ENCODE measurements at regions of chr9 and their contacts with region 1.

Region 1: GRCh38 chr9:133485361-133486260 is 6.7 kb upstream of the SLC2A6 start:
- DNase-seq: peak; percentile 41
- ATAC-seq: peak; percentile 45
- H3K4me3 Mint-ChIP-seq: no peak overlapping the region
- H3K27ac Mint-ChIP-seq: no peak overlapping the region
- H3K4me1 Mint-ChIP-seq: peaks cover 7% of the 10 kb centered on the region
- H3K27me3 Mint-ChIP-seq: no peaks in the 10 kb centered on the region

Region 2: DNA sequence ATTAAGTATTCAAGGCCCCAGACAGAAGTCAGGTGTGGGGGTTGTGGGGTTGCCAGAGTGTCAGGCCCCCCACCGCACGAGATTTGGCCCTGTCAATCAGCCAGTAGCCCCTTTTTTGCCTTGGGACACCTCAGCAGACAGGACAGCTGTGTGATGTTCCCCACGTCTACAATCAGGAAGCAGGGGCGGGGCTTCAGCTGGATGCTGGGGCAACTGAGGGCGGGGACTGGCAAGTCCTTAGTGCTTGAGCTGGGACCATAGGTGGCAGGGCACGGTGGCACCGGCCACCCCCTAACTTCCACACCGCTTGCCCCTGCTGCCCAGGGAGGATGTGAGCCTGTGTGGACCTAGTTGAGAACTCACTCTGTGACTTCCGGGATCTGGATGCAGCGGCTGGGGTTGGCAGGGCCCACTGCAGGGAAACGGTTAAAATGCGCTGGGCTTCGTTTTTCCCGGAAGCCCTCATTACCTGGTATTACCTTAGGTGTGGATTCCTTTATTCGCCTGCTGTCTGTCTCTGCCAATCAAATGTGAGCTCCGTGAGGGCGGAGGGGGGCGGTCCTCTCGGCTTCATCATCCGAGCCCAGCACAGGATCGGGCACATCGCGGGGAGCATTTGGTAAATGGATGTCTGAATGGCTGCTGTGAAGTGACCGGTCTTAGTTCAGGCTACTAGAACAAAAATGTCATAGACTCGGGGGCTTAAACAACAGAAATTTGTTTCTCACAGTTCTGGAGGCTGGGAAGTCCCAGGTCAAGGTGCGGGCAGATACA is 462.3 kb before region 1 on chr9:
- CTCF ChIA-PET with region 1: interaction called, 3 read pairs
- POLR2A ChIA-PET with region 1: no interaction called
- intact Hi-C with region 1: loop called in 1 of 2 experiments (anchors 1 kb)
- DNase-seq: peak; percentile 87
- ATAC-seq: peak; percentile 70
- H3K4me3 Mint-ChIP-seq: peak overlapping the region; percentile 49
- H3K27ac Mint-ChIP-seq: peak overlapping the region; percentile 74
- H3K4me1 Mint-ChIP-seq: peaks cover 18% of the 10 kb centered on the region
- H3K27me3 Mint-ChIP-seq: no peaks in the 10 kb centered on the region

Region 3: GRCh38 chr9:133184962-133185361 is 300.6 kb before region 1 on chr9:
- CTCF ChIA-PET with region 1: interaction called, 17 read pairs
- POLR2A ChIA-PET with region 1: no interaction called
- intact Hi-C with region 1: loop called (anchors 1 to 2 kb)
- DNase-seq: peak; percentile 70
- ATAC-seq: peak; percentile 54
- H3K4me3 Mint-ChIP-seq: no peak overlapping the region
- H3K27ac Mint-ChIP-seq: no peak overlapping the region
- H3K4me1 Mint-ChIP-seq: peaks cover 23% of the 10 kb centered on the region
- H3K27me3 Mint-ChIP-seq: peaks cover 14% of the 10 kb centered on the region

Region 4: DNA sequence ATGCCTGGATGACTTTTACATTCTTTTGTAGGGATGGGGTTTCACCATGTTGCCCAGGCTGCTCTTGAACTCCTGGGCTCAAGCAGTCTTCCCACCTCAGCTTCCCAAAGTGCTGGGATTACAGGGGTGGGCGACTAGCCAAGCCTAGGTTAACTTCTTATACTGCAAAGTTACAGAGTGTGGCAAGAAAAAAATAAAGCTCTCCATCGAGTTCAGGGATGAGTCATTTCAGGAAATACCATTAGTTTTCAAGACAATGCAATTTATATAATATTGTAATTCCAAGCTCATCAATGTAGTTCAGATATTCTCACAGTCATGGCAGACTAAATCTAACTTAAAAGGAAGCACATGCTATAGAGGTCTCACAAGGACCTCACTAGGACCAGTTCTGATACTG is 199.1 kb before region 1 on chr9:
- CTCF ChIA-PET with region 1: no interaction called
- POLR2A ChIA-PET with region 1: no interaction called
- intact Hi-C with region 1: no loop called
- DNase-seq: no peak
- ATAC-seq: no peak
- H3K4me3 Mint-ChIP-seq: no peak overlapping the region
- H3K27ac Mint-ChIP-seq: no peak overlapping the region
- H3K4me1 Mint-ChIP-seq: no peaks in the 10 kb centered on the region
- H3K27me3 Mint-ChIP-seq: no peaks in the 10 kb centered on the region

Region 5: GRCh38 chr9:133342069-133342406 is 143.6 kb before region 1 on chr9:
- CTCF ChIA-PET with region 1: no interaction called
- POLR2A ChIA-PET with region 1: no interaction called
- intact Hi-C with region 1: no loop called
- DNase-seq: no peak
- ATAC-seq: peak; percentile 38
- H3K4me3 Mint-ChIP-seq: no peak overlapping the region
- H3K27ac Mint-ChIP-seq: peak overlapping the region; percentile 58
- H3K4me1 Mint-ChIP-seq: peaks cover 14% of the 10 kb centered on the region
- H3K27me3 Mint-ChIP-seq: no peaks in the 10 kb centered on the region

Region 6: DNA sequence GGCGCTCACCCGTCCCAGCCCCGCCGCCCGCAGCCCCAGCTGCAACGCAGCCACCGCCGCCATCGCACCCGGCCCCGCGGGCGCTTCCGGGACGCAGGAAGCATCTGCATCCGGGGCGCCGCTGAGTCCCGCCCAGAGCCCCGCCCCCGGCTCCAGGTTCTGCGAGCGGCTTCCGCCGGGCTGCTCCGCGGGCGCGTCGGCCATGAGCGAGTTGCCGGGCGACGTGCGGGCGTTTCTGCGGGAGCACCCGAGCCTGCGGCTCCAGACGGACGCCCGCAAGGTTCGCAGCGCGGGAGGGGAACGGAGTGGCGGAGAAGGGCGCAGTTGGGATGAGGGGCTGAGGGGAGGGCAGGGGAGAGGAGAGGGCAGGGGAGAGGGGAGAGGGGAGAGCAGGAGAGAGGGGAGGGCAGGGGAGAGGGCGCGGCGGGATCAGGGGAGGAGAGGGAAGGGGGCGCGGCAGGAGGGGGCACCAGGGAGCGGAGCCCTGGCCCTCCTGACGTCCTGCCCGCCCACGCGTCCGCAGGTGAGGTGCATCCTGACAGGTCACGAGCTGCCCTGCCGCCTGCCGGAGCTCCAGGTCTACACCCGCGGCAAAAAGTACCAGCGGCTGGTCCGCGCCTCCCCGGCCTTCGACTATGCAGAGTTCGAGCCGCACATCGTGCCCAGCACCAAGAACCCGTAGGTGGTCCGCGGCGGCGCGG is 129.1 kb before region 1 on chr9 and contains the starts of genes SURF1 and SURF2:
- CTCF ChIA-PET with region 1: interaction called, 3 read pairs
- POLR2A ChIA-PET with region 1: no interaction called
- intact Hi-C with region 1: loop called in 1 of 2 experiments (anchors 1 kb)
- DNase-seq: peak; percentile 96
- ATAC-seq: peak; percentile 84
- H3K4me3 Mint-ChIP-seq: peak within 1 kb of the TSS; percentile 91
- H3K27ac Mint-ChIP-seq: peak within 1 kb of the TSS; percentile 85
- H3K4me1 Mint-ChIP-seq: peaks cover 52% of the 10 kb centered on the region
- H3K27me3 Mint-ChIP-seq: no peaks in the 10 kb centered on the region
- total RNA-seq, gene SURF1: 17.4 to 29.1 TPM
- total RNA-seq, gene SURF2: 17.3 to 21.8 TPM

Region 7: DNA sequence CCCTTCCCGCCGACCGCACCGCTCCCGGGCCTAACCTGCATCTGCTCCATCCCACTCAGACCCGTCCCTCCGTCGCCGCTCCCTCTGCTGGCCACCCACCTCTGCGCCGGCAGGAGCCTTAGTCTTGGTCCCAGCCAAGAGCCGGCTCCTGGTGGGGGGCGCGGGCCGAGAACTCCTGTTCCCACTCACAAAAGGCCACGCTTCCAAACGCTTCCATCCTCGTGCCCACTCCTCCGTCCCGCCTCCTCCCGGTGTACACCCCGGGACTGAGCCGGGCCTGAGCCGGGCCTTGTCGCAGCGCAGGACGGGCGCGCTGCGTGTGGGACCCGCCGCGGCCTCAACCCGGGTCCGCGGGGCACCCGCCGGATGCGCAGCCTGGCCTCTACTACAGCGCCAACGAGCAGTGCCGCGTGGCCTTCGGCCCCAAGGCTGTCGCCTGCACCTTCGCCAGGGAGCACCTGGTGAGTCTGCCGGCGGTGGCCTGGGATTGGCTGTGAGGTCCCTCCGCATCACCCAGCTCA is 55.9 kb before region 1 on chr9:
- CTCF ChIA-PET with region 1: no interaction called
- POLR2A ChIA-PET with region 1: no interaction called
- intact Hi-C with region 1: no loop called
- DNase-seq: peak; percentile 47
- ATAC-seq: no peak
- H3K4me3 Mint-ChIP-seq: no peak overlapping the region
- H3K27ac Mint-ChIP-seq: no peak overlapping the region
- H3K4me1 Mint-ChIP-seq: peaks cover 3% of the 10 kb centered on the region
- H3K27me3 Mint-ChIP-seq: peaks cover 29% of the 10 kb centered on the region

Region 8: GRCh38 chr9:133459476-133460404 is 25.9 kb before region 1 on chr9 and contains the start of gene CACFD1:
- CTCF ChIA-PET with region 1: interaction called, 6 read pairs
- POLR2A ChIA-PET with region 1: no interaction called
- intact Hi-C with region 1: loop called in 1 of 2 experiments (anchors 2 kb)
- DNase-seq: peak; percentile 96
- ATAC-seq: peak; percentile 88
- H3K4me3 Mint-ChIP-seq: peak within 1 kb of the TSS; percentile 74
- H3K27ac Mint-ChIP-seq: peak within 1 kb of the TSS; percentile 42
- H3K4me1 Mint-ChIP-seq: no peaks in the 10 kb centered on the region
- H3K27me3 Mint-ChIP-seq: no peaks in the 10 kb centered on the region
- total RNA-seq, gene CACFD1: 0.87 to 0.90 TPM

Measured in activated CD4-positive, alpha-beta T cell treated with anti-CD3 and anti-CD28 coated beads for 36 hours (primary cell).